IMR-90 (cell line): ENCODE measurements at regions of chr7 and their contacts with region 1.

Region 1: GRCh38 chr7:143416565-143417149 is 8.0 kb upstream of the EPHA1 start:
- DNase-seq: peak; percentile 53
- ATAC-seq: peak; percentile 73
- H3K4me3 ChIP-seq: no peak overlapping the region
- H3K27ac ChIP-seq: no peak overlapping the region
- H3K4me1 ChIP-seq: peaks cover 4% of the 10 kb centered on the region
- H3K27me3 ChIP-seq: no peaks in the 10 kb centered on the region
- CTCF ChIP-seq: peak; percentile 73
- POLR2A ChIP-seq: no peak
- RAD21 ChIP-seq: peak; percentile 73

Region 2: GRCh38 chr7:143050931-143051330 is 365.7 kb before region 1 on chr7:
- CTCF ChIA-PET with region 1: interaction called, 10 read pairs
- POLR2A ChIA-PET with region 1: no interaction called
- dilution Hi-C with region 1: no loop called
- in situ Hi-C with region 1: no loop called
- intact Hi-C with region 1: no loop called
- DNase-seq: no peak
- ATAC-seq: no peak
- H3K4me3 ChIP-seq: no peak overlapping the region
- H3K27ac ChIP-seq: no peak overlapping the region
- H3K4me1 ChIP-seq: no peaks in the 10 kb centered on the region
- H3K27me3 ChIP-seq: no peaks in the 10 kb centered on the region
- CTCF ChIP-seq: no peak
- POLR2A ChIP-seq: no peak
- RAD21 ChIP-seq: no peak

Region 3: GRCh38 chr7:143240291-143241168 is 176.1 kb before region 1 on chr7:
- CTCF ChIA-PET with region 1: interaction called, 24 read pairs
- POLR2A ChIA-PET with region 1: no interaction called
- dilution Hi-C with region 1: no loop called
- in situ Hi-C with region 1: no loop called
- intact Hi-C with region 1: loop called (anchors 2 kb)
- DNase-seq: peak; percentile 86
- ATAC-seq: peak; percentile 95
- H3K4me3 ChIP-seq: no peak overlapping the region
- H3K27ac ChIP-seq: no peak overlapping the region
- H3K4me1 ChIP-seq: peaks cover 4% of the 10 kb centered on the region; the same call in 1 of the 2 replicates
- H3K27me3 ChIP-seq: peaks cover 4% of the 10 kb centered on the region; the same call in 1 of the 2 replicates
- CTCF ChIP-seq: peak; percentile 91
- POLR2A ChIP-seq: no peak
- RAD21 ChIP-seq: peak; percentile 89